ENCODE measurements at regions of chr10 and their contacts with region 1.

Region 1: DNA sequence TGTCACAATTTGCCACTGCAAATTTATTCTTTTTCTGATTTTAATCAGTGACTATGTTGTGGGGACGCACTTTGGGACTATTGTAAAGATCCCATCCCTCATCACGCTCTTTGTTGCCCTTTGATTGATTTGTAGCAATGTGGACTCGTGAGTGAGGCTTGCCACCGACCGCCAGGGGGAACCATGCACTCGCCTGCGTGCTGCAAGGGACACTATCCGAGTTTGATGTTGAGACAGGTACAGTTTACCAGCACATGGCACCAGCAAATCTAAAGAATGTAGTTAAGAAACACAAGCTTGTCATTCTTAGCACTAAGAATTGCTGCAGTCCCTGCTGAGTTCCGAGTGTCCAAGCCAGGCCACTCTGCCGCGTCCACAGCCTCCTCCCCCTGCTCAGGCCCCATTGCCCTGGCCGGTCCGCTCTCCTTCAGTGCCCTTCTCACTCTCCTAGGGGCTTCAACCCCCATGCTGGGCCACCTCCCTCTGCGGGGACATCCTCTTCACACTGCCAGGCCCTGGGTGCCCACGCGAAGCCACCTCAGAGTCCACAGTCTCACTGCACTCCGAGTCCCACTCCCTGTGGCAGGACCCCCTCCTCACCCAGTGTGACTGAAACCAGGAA is 2.0 kb upstream of the SFTPA2 start:
- DNase-seq: peak; percentile 59 to 66
- H3K4me3 ChIP-seq: no peak overlapping the region
- H3K27ac ChIP-seq: no peak overlapping the region
- H3K4me1 ChIP-seq: peaks cover 8% of the 10 kb centered on the region
- H3K27me3 ChIP-seq: peaks cover 38% of the 10 kb centered on the region
- CTCF ChIP-seq: peak; percentile 92

Region 2: GRCh38 chr10:79374312-79375191 is 187.7 kb before region 1 on chr10:
- CTCF ChIA-PET with region 1: no interaction called
- POLR2A ChIA-PET with region 1: no interaction called
- intact Hi-C with region 1: no loop called
- DNase-seq: peak; percentile 63 to 87
- H3K4me3 ChIP-seq: no peak overlapping the region
- H3K27ac ChIP-seq: no peak overlapping the region
- H3K4me1 ChIP-seq: 0 out of 2 replicates have a peak, but pooled peaks cover 10% of the 10 kb centered on the region
- H3K27me3 ChIP-seq: no peaks in the 10 kb centered on the region
- CTCF ChIP-seq: peak; percentile 100

Region 3: DNA sequence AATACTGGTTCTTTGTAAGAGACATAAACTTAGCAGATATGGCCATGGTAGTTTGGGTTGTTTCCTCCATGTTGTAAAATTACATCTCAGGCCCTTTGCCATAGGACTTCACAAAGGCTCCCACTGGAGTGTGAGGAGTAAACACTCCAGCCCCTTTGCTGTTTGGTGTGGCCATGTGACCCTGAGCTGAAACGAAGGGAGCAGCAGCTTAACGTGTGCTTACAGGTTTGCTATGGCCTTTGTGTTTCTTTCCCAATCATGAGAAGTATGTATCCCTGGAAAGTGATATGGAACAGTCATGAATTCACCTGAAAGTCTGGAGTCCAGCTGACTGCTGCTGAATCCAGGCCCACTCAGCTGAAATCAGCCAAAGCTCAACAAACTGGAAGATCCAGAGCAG is 24.7 kb after region 1 on chr10:
- CTCF ChIA-PET with region 1: no interaction called
- POLR2A ChIA-PET with region 1: no interaction called
- intact Hi-C with region 1: no loop called
- DNase-seq: no peak
- H3K4me3 ChIP-seq: no peak overlapping the region
- H3K27ac ChIP-seq: no peak overlapping the region
- H3K4me1 ChIP-seq: no peaks in the 10 kb centered on the region
- H3K27me3 ChIP-seq: peaks cover 68% of the 10 kb centered on the region
- CTCF ChIP-seq: no peak

Region 4: DNA sequence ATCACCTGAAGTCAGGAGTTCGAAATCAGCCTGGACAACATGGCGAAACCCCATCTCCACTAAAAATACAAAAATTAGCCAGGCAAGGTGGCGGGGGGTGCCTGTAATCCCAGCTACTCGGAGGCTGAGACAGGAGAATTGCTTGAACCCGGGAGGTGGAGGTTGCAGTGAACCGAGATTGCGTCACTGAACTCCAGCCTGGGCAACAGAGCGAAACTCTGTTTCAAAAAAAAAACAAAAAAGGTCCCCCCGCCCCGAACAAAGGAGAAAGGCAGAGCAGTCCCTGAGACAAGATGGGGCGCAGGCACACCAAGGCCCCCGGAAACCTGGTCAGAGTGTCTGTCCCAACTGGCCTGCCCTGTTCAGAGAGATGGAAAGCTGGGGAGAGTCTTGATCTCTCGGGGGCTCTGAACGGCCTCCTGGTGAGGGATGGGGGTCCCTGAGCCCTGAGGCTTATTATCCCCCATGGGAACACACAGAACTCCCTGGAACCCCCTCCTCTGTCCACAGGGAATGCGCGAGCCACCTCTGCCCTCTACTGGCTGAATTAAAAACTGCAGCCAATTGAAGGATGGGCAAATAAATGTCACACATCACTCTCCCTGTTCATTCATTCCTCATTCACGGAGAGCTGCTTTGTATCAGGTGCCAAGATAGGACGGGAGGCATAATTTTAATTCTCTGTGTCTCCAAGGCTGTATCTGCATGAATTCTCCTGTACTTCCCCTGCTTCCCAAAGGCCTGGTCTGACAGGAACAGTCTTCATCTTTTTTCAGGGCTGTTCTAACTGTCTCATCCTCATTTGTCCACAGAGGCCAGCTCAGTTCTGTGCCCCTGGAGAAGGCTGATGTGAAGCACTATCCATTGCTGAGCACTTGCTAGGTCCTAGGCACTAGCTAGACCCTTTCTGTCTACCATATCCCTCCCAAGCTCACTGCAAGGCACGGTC is 698.3 kb after region 1 on chr10:
- CTCF ChIA-PET with region 1: no interaction called
- POLR2A ChIA-PET with region 1: no interaction called
- intact Hi-C with region 1: loop called (anchors 10 kb)
- DNase-seq: peak in 1 of 2 experiments; percentile 45
- H3K4me3 ChIP-seq: no peak overlapping the region
- H3K27ac ChIP-seq: no peak overlapping the region
- H3K4me1 ChIP-seq: no peaks in the 10 kb centered on the region
- H3K27me3 ChIP-seq: no peaks in the 10 kb centered on the region; the same call in 1 of the 2 replicates
- CTCF ChIP-seq: peak; percentile 98